ENCODE measurements at regions of chr21 and their contacts with region 1.

Region 1: DNA sequence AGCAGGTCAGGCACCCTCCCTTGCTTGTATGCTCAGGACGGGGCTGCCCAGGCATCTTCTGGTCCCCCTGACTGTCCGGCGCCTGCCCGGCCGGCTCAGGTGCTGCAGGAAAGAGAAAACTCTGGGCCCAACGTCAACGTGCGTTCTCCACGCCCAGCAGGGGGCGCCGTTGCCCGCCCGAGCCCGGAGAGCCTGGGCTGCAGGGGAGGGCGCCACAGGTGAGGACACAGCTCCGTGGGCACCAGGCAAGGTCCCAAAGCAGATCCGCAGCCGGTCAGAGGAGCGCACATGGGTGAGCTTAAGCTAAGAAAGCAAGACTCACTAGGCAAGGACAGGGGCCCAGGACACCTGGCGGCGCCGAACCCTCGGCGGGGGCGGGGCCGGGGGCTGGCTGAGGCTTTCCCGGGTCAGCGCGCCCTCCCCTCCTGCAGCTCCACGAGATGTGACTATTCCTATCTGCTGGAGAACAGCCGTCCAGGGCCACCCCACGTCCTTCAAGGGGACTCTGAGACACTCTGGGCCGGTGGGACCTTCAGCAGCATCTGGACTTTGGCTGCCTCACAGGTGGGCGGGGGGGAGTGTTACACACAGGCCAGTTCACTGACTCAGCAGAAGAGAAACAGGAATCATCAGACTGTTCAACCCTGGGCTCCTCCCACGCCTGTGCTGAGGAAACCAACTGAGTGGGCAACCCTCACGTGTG is 29.3 kb downstream of the KRTAP10-1 start:
- DNase-seq: peak; percentile 89

Region 2: GRCh38 chr21:44742418-44743153 is 231.9 kb after region 1 on chr21:
- CTCF ChIA-PET with region 1: interaction called, 10 read pairs
- POLR2A ChIA-PET with region 1: no interaction called
- DNase-seq: no peak